AG04449 (cell line): ENCODE measurements at regions of chr10 and their contacts with region 1.

Region 1: DNA sequence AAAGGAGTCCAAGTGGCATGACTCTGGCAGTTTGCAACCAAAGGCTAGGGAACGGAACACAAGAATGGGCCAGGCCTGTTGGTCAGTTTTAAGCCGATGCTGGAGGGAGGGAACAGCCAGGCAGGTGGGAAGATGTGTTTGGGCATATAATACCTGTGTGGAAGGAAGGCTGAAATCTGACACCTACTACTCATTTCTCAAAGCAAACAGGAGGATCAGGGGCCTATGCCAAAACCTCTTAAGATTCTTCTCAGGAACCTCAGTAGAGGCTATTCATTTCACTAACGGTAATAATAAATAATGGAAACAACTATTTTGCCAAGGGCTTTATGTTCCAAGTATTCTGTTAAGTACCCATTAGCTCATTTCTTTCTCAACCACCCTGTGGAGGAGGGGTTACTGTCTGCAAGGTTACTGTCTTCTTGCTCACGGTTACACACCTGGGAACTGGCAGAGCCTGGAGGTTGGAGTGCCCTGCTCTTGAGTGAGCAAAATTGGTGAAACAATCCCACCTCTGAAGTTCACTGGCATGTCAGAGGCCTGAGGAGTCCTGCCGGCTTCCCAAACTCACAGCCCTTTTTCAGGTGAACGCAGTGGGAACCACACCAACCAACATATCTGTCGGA is 35.5 kb downstream of the GOT1 start:
- DNase-seq: no peak
- H3K4me3 ChIP-seq: no peak overlapping the region
- CTCF ChIP-seq: no peak

Region 2: DNA sequence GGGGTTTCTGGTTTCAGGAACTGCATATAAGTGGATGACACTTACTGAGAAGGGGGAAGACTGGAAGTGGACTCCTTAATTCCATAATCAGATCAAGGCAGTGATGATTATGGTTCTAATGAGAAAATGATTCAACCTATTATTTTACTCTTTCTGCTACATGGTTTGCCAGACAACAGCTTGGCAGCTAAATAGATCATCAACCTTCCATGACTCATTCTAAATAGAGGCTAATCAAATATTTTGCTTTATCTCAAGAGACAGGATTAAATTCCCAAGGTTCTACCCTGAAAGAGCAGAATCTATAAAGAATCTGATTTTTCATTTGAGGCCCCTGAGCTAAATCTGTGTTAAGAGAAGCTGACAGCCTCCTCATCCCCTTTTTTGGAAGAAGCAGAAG is 19.4 kb before region 1 on chr10:
- CTCF ChIA-PET with region 1: interaction called, 23 read pairs
- POLR2A ChIA-PET with region 1: no interaction called
- DNase-seq: no peak
- H3K4me3 ChIP-seq: no peak overlapping the region
- CTCF ChIP-seq: no peak

Region 3: DNA sequence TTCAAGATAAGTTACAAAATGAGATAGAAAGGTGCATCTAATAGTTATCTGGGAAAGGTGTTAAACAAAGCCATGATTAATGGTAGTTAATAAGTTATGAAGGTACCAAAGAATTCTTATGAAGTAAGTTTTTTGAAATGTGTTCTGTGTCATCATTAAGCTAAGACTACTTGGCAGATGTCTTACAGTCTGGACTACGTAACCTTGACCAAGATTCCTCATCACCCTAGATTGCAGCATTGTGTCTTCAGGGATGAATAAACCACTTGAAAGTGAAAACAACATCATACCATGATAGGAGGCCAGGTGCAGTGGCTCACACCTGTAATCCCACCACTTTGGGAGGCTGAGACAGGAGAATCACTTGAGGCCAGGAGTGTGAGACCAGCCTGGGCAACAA is 12.7 kb before region 1 on chr10:
- CTCF ChIA-PET with region 1: interaction called, 23 read pairs
- POLR2A ChIA-PET with region 1: interaction called, 3 read pairs
- DNase-seq: no peak
- H3K4me3 ChIP-seq: no peak overlapping the region
- CTCF ChIP-seq: no peak

Region 4: DNA sequence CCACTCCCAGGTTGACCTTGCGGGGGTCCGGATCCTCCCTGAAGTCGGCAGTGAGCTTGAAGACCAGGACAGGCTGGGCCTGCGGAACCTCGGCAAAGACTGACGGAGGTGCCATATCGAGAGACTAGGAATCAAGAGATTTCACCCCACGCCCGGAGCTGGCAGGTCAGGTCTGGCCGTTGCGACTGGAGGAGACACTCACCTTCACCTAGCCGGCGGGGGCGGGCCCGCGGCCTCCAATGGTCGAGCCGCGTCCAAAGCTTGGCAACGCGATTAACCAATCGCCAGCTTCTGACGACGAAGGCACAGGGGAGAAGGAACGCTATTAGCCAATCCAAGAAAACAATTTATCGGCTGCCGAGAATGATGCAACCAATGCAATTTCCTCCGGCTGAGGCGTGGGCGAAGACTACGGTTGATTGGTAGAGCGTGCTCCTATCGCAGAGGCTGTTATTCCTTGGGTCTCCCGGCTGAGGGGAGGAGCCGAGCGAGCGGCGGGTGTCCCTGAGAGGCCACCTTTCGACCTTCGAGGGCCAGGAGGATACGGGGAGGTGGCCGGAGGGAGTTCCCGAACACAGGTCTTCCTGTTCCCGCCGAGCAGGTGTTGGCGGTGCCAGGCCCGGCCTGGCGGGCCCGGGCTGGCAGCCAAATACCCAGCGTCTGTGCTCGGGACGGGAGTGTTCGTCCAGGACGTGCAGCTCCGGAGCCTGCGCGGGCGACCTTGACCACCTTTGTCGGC is 35.7 kb after region 1 on chr10 and contains the start of gene GOT1:
- CTCF ChIA-PET with region 1: interaction called, 36 read pairs
- POLR2A ChIA-PET with region 1: no interaction called
- DNase-seq: peak; percentile 93
- H3K4me3 ChIP-seq: peak within 1 kb of the TSS; percentile 100
- CTCF ChIP-seq: no peak

Region 5: GRCh38 chr10:99620713-99621453 is 226.0 kb after region 1 on chr10:
- CTCF ChIA-PET with region 1: interaction called, 63 read pairs
- POLR2A ChIA-PET with region 1: no interaction called
- DNase-seq: peak; percentile 61
- H3K4me3 ChIP-seq: peak overlapping the region; percentile 67
- CTCF ChIP-seq: no peak